Left ventricle myocardium inferior (tissue), 1 donor: ENCODE measurements at regions of chr9 and their contacts with region 1.

Region 1: GRCh38 chr9:35540315-35540714 is 50.4 kb downstream of the RUSC2 start:
- DNase-seq: no peak
- H3K4me3 ChIP-seq: peak overlapping the region; percentile 71
- H3K27ac ChIP-seq: peak overlapping the region; percentile 97
- H3K4me1 ChIP-seq: peaks cover 96% of the 10 kb centered on the region
- H3K27me3 ChIP-seq: no peaks in the 10 kb centered on the region
- CTCF ChIP-seq: no peak

Region 2: GRCh38 chr9:35508069-35508468 is 32.2 kb before region 1 on chr9:
- intact Hi-C with region 1: loop called (anchors 5 kb)
- DNase-seq: no peak
- H3K4me3 ChIP-seq: no peak overlapping the region
- H3K27ac ChIP-seq: peak overlapping the region; percentile 90
- H3K4me1 ChIP-seq: peaks cover 56% of the 10 kb centered on the region
- H3K27me3 ChIP-seq: no peaks in the 10 kb centered on the region
- CTCF ChIP-seq: no peak

Region 3: GRCh38 chr9:35611230-35611797 is 71.0 kb after region 1 on chr9:
- intact Hi-C with region 1: no loop called
- DNase-seq: peak; percentile 30
- H3K4me3 ChIP-seq: no peak overlapping the region
- H3K27ac ChIP-seq: no peak overlapping the region
- H3K4me1 ChIP-seq: peaks cover 9% of the 10 kb centered on the region
- H3K27me3 ChIP-seq: peaks cover under 1% of the 10 kb centered on the region
- CTCF ChIP-seq: peak; percentile 74